GM12878 (cell line): ENCODE measurements at regions of chr20 and their contacts with region 1.

Region 1: DNA sequence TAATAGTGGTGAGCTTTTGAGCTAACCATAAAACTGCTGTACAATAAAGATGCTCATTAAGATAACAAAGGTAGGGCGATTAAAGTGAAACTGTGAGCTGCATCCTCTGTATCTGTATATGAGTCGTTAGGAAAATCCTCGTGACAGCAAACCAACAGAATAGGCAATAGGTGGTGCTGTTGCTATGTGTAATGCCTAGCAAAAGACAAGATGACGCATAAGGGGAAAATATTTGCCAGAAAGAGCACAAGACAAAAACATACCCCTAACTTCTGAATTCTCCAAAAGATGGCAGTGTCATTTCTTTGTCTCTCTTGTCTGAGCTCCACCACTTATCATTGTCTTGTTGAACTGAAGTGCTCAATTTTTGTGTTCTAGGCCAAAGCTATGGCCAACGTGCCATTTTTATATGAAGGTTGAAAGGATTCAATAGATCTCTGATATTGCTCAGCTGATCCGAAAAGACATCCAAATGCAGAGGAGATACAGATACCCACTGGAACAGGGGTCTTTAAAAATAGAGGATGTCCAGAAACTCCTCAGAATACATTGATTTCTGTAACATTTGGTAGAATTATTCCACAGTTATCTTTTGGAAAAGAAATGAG is 56.3 kb upstream of the ANKEF1 start:
- DNase-seq: peak; percentile 41
- ATAC-seq: peak; percentile 97
- H3K4me3 ChIP-seq: no peak overlapping the region
- H3K27ac ChIP-seq: no peak overlapping the region
- H3K4me1 ChIP-seq: no peaks in the 10 kb centered on the region
- H3K27me3 ChIP-seq: no peaks in the 10 kb centered on the region; a peak in 1 of 4 replicates
- CTCF ChIP-seq: peak; percentile 61 to 94 (median 79)
- EP300 ChIP-seq: no peak
- POLR2A ChIP-seq: no peak
- RAD21 ChIP-seq: peak; percentile 96

Region 2: DNA sequence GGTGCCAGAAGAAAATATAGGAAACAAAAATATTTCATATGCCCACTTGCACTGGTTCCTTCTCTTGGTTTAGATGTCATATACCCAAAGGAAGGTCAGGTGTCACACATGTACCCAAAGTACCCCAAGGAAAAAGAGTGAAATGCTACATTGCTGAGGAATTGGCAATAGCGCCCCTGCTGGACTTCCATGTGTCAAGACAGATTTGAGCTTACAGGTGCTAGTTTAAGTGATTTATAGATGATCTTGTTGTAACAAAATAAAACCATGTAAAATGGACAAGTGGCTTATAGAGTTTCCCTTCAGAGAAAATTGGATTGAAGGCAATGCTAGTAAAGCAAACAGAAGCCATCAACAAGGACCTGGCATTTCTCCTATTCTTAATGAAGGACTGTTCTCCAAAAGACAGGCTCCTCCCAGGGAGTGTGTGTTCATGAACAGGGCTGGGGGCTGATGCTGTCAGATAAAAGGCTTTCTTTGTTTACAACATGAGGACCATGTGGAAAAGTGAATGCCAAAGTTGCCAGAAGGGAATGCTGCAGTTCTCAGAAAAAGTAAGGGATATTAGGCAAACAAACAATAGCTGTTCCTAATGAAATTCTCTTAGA is 75.3 kb before region 1 on chr20:
- CTCF ChIA-PET with region 1: no interaction called
- POLR2A ChIA-PET with region 1: no interaction called
- RAD21 ChIA-PET with region 1: no interaction called
- SMC1A ChIA-PET with region 1: no interaction called
- in situ Hi-C with region 1: no loop called
- intact Hi-C with region 1: no loop called
- DNase-seq: no peak
- ATAC-seq: peak; percentile 53; the same call in 2 of the 3 replicates
- H3K4me3 ChIP-seq: no peak overlapping the region
- H3K27ac ChIP-seq: no peak overlapping the region
- H3K4me1 ChIP-seq: no peaks in the 10 kb centered on the region
- H3K27me3 ChIP-seq: no peaks in the 10 kb centered on the region; a peak in 1 of 4 replicates
- CTCF ChIP-seq: peak; percentile 44 to 61 (median 61)
- EP300 ChIP-seq: no peak
- POLR2A ChIP-seq: no peak
- RAD21 ChIP-seq: no peak

Region 3: DNA sequence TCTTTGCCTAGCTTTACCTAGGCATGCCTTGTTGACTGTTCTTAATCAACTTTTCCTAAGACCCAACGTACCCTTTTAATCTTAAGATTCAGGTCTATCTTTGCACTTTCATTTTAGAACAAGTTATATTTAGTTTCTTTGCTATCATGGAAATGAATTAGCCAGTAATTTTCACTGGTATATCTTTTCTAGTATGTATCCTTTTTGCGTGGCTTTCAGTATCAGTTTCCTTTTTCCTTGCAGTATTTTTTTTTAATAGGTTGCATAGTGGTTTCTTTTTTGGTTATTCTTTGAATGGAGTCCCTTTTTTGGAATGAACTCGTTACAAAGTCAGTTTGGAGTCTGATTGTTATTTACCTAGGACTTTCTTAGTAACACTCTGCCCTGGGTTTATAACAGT is 63.6 kb after region 1 on chr20:
- CTCF ChIA-PET with region 1: no interaction called
- POLR2A ChIA-PET with region 1: no interaction called
- RAD21 ChIA-PET with region 1: no interaction called
- SMC1A ChIA-PET with region 1: no interaction called
- in situ Hi-C with region 1: no loop called
- intact Hi-C with region 1: no loop called
- DNase-seq: no peak
- ATAC-seq: no peak
- H3K4me3 ChIP-seq: no peak overlapping the region; the same call in 1 of the 2 replicates
- H3K27ac ChIP-seq: no peak overlapping the region
- H3K4me1 ChIP-seq: no peaks in the 10 kb centered on the region; the same call in 1 of the 2 replicates
- H3K27me3 ChIP-seq: no peaks in the 10 kb centered on the region
- CTCF ChIP-seq: no peak
- EP300 ChIP-seq: no peak
- POLR2A ChIP-seq: no peak
- RAD21 ChIP-seq: no peak

Region 4: GRCh38 chr20:10090588-10091166 is 112.2 kb after region 1 on chr20:
- CTCF ChIA-PET with region 1: interaction called, 51 read pairs
- POLR2A ChIA-PET with region 1: no interaction called
- RAD21 ChIA-PET with region 1: interaction called, 7 read pairs
- SMC1A ChIA-PET with region 1: interaction called, 14 read pairs
- in situ Hi-C with region 1: no loop called
- intact Hi-C with region 1: loop called (anchors 1 kb)
- DNase-seq: no peak
- ATAC-seq: peak; percentile 92
- H3K4me3 ChIP-seq: no peak overlapping the region
- H3K27ac ChIP-seq: no peak overlapping the region
- H3K4me1 ChIP-seq: no peaks in the 10 kb centered on the region
- H3K27me3 ChIP-seq: no peaks in the 10 kb centered on the region
- CTCF ChIP-seq: peak; percentile 69 to 74 (median 69)
- EP300 ChIP-seq: no peak
- POLR2A ChIP-seq: no peak
- RAD21 ChIP-seq: peak; percentile 65

Region 5: GRCh38 chr20:10225439-10226060 is 247.0 kb after region 1 on chr20:
- CTCF ChIA-PET with region 1: interaction called, 5 read pairs
- POLR2A ChIA-PET with region 1: no interaction called
- RAD21 ChIA-PET with region 1: no interaction called
- SMC1A ChIA-PET with region 1: interaction called, 3 read pairs
- in situ Hi-C with region 1: no loop called
- intact Hi-C with region 1: loop called (anchors 10 kb)
- DNase-seq: no peak
- ATAC-seq: peak; percentile 66
- H3K4me3 ChIP-seq: no peak overlapping the region
- H3K27ac ChIP-seq: no peak overlapping the region
- H3K4me1 ChIP-seq: no peaks in the 10 kb centered on the region
- H3K27me3 ChIP-seq: no peaks in the 10 kb centered on the region
- CTCF ChIP-seq: peak in 1 of 3 experiments; percentile 24; a peak in 2 of 6 replicates
- EP300 ChIP-seq: no peak
- POLR2A ChIP-seq: no peak
- RAD21 ChIP-seq: peak; percentile 20; the same call in 1 of the 2 replicates

Region 6: DNA sequence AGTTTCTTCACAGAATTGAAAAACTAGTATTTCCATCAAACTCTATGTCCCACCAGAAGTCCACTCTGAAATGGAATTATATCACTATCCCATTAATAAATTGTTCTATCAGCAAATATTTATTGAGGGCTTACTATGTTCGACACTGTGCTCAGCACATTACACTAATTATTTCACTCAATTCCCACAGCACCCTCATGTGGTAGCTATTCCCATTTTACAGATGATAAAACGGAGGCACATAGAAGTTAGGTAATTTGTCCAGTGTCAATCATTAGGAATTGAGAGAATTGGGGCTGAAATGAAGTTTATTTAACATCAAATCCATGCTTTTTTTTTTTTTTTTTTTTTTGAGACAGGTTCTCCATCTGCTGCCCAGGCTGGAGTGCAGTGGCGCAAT is 403.0 kb after region 1 on chr20:
- CTCF ChIA-PET with region 1: interaction called, 73 read pairs
- POLR2A ChIA-PET with region 1: no interaction called
- RAD21 ChIA-PET with region 1: interaction called, 17 read pairs
- SMC1A ChIA-PET with region 1: interaction called, 58 read pairs
- in situ Hi-C with region 1: no loop called
- intact Hi-C with region 1: loop called (anchors 1 kb)
- DNase-seq: no peak
- ATAC-seq: peak; percentile 87
- H3K4me3 ChIP-seq: no peak overlapping the region
- H3K27ac ChIP-seq: no peak overlapping the region
- H3K4me1 ChIP-seq: no peaks in the 10 kb centered on the region
- H3K27me3 ChIP-seq: no peaks in the 10 kb centered on the region
- CTCF ChIP-seq: peak in 1 of 3 experiments; percentile 19; a peak in 2 of 6 replicates
- EP300 ChIP-seq: no peak
- POLR2A ChIP-seq: no peak
- RAD21 ChIP-seq: no peak

Region 7: DNA sequence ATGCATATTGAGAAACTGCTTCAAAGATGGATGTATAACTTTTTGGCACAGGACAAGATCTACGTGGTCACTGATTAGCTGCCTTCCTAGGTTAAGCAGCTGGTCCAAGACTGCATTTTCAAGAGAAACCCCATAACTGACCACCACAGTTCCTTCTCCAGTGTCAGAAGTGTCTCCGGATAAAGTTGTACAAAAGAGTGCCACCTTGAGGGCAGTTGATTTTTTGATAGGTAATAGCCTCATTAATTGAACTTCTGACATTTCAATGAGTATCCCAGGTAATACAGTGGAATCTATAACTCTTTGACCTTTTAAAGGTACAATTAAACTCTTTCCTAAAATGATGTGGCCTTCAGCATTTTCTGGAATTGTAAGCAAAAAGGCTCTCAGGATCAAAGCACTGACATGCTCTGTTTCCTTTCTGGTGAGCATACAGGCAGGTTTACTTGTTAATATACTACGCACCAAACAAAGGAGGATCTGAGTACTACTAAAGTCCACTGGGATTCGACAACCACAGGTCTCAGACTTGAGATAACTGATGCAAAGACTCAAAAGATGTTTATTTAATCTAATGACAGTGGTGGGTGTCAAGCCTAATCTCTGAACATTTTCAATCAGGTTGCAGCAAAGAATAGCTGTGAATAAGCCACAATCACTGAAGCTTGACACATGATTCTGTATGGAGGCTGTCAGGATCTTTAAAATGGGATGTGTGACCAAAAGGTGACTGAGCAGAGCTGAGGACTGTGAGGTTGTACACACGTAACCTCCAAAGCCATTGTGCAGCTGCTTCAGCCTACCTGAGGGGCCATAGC is 434.3 kb after region 1 on chr20:
- CTCF ChIA-PET with region 1: interaction called, 7 read pairs
- POLR2A ChIA-PET with region 1: no interaction called
- RAD21 ChIA-PET with region 1: interaction called, 3 read pairs
- SMC1A ChIA-PET with region 1: interaction called, 5 read pairs
- in situ Hi-C with region 1: no loop called
- intact Hi-C with region 1: loop called (anchors 5 kb)
- DNase-seq: no peak
- ATAC-seq: peak; percentile 85
- H3K4me3 ChIP-seq: no peak overlapping the region
- H3K27ac ChIP-seq: no peak overlapping the region
- H3K4me1 ChIP-seq: peaks cover 8% of the 10 kb centered on the region
- H3K27me3 ChIP-seq: no peaks in the 10 kb centered on the region
- CTCF ChIP-seq: peak; percentile 19 to 32 (median 20); a peak in 1 of 6 replicates
- EP300 ChIP-seq: peak; percentile 26 to 53; a peak in 2 of 4 replicates
- POLR2A ChIP-seq: no peak
- RAD21 ChIP-seq: no peak

Region 8: DNA sequence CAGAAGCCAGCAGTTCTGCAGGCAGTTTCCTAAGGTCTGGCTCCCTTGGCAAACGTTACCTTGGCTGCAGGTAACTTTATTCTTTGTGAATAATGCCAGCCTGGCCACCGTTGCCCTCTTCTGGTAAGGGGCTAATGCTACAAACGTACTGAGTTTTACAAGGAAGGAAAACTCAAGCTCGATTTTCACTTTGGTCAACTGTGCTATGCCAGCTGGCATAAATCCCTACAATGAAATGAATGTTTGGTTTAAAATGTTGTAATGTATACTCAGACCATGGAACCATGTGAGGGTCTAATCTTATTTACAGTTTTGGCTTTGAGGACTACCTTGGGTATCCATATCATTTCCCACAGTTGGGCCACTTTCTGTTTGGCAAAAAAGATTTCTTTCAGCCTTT is 558.0 kb after region 1 on chr20:
- CTCF ChIA-PET with region 1: interaction called, 9 read pairs
- POLR2A ChIA-PET with region 1: no interaction called
- RAD21 ChIA-PET with region 1: no interaction called
- SMC1A ChIA-PET with region 1: interaction called, 4 read pairs
- in situ Hi-C with region 1: no loop called
- intact Hi-C with region 1: loop called (anchors 5 kb)
- DNase-seq: no peak
- ATAC-seq: peak; percentile 74
- H3K4me3 ChIP-seq: no peak overlapping the region
- H3K27ac ChIP-seq: no peak overlapping the region
- H3K4me1 ChIP-seq: peaks cover 1% of the 10 kb centered on the region
- H3K27me3 ChIP-seq: no peaks in the 10 kb centered on the region
- CTCF ChIP-seq: peak; percentile 22 to 55 (median 54); a peak in 5 of 6 replicates
- EP300 ChIP-seq: no peak
- POLR2A ChIP-seq: no peak
- RAD21 ChIP-seq: peak; percentile 52; the same call in 1 of the 2 replicates

Region 9: GRCh38 chr20:10647465-10647864 is 669.0 kb after region 1 on chr20:
- CTCF ChIA-PET with region 1: no interaction called
- POLR2A ChIA-PET with region 1: no interaction called
- RAD21 ChIA-PET with region 1: no interaction called
- SMC1A ChIA-PET with region 1: no interaction called
- in situ Hi-C with region 1: no loop called
- intact Hi-C with region 1: loop called (anchors 10 kb)
- DNase-seq: no peak
- ATAC-seq: peak; percentile 62
- H3K4me3 ChIP-seq: no peak overlapping the region
- H3K27ac ChIP-seq: no peak overlapping the region
- H3K4me1 ChIP-seq: peaks cover 14% of the 10 kb centered on the region
- H3K27me3 ChIP-seq: no peaks in the 10 kb centered on the region
- CTCF ChIP-seq: peak; percentile 37 to 52 (median 42); a peak in 5 of 6 replicates
- EP300 ChIP-seq: no peak
- POLR2A ChIP-seq: no peak
- RAD21 ChIP-seq: peak; percentile 43